Right cardiac atrium (tissue), 5 donors: ENCODE measurements at regions of chr1 and their contacts with region 1.

Region 1: DNA sequence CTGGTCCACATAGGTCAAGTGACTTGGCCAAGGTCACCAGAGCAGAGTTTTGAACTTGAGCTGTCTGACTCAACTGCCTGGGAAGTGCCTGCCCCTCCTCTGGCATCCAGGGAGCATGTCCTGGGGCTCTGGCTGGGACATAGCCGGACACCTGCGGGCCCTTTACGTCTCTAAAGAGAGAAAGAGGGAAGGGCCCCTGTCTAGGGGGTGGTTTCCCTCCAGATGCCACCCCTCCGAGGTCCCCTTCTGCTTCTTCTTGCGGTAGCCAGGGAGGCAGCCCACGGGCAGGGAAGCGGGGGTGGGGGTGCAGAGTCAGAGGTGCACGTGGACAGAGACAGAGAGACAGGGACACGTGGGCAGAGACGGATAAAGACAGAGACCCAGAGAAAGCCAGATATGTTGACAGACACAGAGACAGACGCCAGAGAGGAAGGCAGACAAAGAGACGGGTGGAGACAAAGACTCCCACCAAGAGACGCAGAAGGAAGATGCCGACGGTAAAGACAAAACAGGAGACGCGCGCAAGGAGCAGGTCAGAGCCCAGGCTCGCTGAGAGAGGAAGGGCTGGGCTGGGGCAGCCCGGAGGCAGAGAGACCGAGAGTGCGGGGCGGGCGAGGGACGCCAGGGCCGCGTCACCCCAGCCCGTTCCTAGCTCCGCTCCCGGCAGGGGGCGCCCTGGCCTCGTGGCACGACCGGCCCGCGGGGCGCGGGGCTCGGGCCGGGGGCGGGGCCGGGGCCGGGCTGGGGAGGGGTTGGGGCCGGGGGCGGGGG is 458 bp upstream of the ALPL start:
- DNase-seq: peak; percentile 79 to 93 (median 89)
- ATAC-seq: peak; percentile 81 to 84
- H3K4me3 ChIP-seq: peak overlapping the region; percentile 43
- H3K27ac ChIP-seq: no peak overlapping the region
- H3K4me1 ChIP-seq: peaks cover 8% of the 10 kb centered on the region
- H3K27me3 ChIP-seq: no peaks in the 10 kb centered on the region

Region 2: GRCh38 chr1:21567241-21568005 is 58.7 kb after region 1 on chr1:
- intact Hi-C with region 1: loop called in 3 of 4 experiments (anchors 2 to 5 kb)
- DNase-seq: peak in 1 of 3 donors; percentile 58
- ATAC-seq: no peak
- H3K4me3 ChIP-seq: no peak overlapping the region
- H3K27ac ChIP-seq: peak overlapping the region; percentile 43
- H3K4me1 ChIP-seq: peaks cover 2% of the 10 kb centered on the region
- H3K27me3 ChIP-seq: no peaks in the 10 kb centered on the region

Region 3: DNA sequence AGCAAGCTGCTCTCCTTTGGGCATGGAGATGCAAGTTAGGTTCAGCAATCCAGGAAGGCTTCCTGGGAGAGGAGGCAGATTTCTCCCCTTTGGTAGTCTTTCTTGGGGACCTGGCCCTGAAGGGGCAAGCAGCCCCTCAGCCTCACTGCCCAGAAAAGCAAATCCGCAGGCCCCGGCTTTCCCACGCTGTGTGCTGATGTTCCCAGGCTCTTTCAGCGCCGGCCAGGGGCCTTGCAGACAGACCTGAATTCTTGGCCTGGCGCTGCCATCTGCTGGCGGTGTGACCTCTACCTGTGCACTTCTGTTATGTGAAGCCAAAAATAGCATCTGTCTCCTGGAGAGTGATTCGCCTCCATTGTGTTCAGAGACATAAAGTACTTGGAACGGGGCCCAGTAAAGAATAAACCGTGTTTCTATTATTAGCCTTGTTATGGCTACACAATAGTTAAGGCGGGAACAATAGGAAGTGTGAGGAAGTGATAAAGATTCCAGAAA is 65.3 kb after region 1 on chr1:
- intact Hi-C with region 1: loop called (anchors 2 to 5 kb)
- DNase-seq: peak; percentile 83 to 94 (median 91)
- ATAC-seq: peak; percentile 84 to 87
- H3K4me3 ChIP-seq: no peak overlapping the region
- H3K27ac ChIP-seq: peak overlapping the region; percentile 93
- H3K4me1 ChIP-seq: peaks cover 6% of the 10 kb centered on the region
- H3K27me3 ChIP-seq: no peaks in the 10 kb centered on the region